MCF 10A (cell line): ENCODE measurements at regions of chr5 and their contacts with region 1.

Region 1: DNA sequence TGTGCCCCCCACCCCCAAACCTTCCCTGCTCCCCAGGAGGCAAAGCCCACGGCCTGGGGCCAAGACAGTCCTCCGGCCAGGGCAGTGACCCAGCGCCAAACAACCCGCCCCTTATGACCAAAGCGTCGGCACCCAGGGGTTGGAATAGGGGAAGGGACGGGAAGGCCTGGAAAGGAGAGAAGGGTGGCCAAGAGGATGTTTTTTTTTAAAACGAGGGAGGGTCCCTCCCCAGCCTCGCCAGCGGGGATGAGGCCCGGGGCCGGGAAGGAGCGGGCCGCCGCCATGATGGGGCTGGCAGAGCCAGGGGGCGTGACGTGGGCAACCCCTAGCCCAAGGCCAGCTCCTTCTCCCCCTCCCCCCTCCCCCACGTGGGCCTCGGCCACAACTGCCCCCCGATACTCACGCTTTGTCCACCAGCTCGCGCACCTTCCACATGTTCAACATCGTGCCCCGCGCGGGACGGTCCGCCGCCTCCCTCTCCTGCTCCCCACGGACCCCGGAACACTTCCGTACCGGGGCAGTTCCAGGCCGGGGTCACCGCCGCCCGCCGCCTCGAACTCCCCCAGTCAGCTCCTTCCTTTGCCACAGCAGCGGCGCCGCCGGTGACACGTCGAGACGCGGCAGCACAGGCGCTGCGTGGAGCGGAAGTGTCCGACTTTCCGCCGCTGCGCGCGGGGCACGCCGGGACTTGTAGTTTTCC is at the start of gene CLINT1:
- DNase-seq: peak; percentile 92
- H3K4me3 Mint-ChIP-seq: peak within 1 kb of the TSS; percentile 96
- H3K27ac Mint-ChIP-seq: peak within 1 kb of the TSS; percentile 99
- H3K4me1 Mint-ChIP-seq: peaks cover 22% of the 10 kb centered on the region
- H3K27me3 Mint-ChIP-seq: no peaks in the 10 kb centered on the region
- CTCF ChIP-seq: no peak
- total RNA-seq, gene CLINT1: 170 and 176 TPM in 2 replicates

Region 2: DNA sequence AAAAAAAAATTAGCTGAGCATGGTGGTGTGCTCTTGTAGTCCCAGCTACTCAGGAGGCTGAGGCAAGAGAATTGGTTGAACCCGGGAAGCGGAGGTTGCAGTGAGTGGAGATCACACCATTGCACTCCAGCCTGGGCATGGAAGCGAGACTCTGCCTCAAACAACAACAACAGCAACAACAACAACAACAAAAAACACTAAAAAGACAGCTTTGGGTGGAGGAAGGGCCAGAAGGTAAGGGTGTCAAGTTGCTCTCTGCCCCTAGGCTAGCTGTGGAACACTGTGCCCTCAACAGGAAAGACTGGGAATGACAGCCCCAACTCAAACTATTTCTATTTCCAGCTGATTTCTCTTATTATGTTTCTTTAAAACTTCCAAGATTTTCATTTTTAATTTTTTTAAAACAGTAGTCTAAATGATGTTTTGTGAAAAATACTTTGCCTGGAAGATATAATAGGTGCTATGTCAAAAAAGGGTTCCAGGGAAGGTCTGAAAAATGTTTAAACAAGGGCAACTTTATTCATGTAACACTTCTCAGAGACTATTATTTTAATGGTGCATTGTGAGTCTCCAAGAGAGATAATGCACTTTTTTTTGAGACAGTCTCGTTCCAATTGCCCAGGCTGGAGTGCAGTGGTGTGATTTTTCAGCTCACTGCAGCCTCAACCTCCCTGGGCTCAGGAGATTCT is 29.6 kb before region 1 on chr5:
- CTCF ChIA-PET with region 1: interaction called, 34 read pairs
- POLR2A ChIA-PET with region 1: interaction called, 5 read pairs
- intact Hi-C with region 1: no loop called
- DNase-seq: peak; percentile 64
- H3K4me3 Mint-ChIP-seq: no peak overlapping the region
- H3K27ac Mint-ChIP-seq: no peak overlapping the region
- H3K4me1 Mint-ChIP-seq: peaks cover 27% of the 10 kb centered on the region
- H3K27me3 Mint-ChIP-seq: no peaks in the 10 kb centered on the region
- CTCF ChIP-seq: peak; percentile 38

Region 3: GRCh38 chr5:157842185-157842584 is 16.5 kb before region 1 on chr5:
- CTCF ChIA-PET with region 1: interaction called, 35 read pairs
- POLR2A ChIA-PET with region 1: interaction called, 7 read pairs
- intact Hi-C with region 1: no loop called
- DNase-seq: no peak
- H3K4me3 Mint-ChIP-seq: no peak overlapping the region
- H3K27ac Mint-ChIP-seq: no peak overlapping the region
- H3K4me1 Mint-ChIP-seq: peaks cover 10% of the 10 kb centered on the region
- H3K27me3 Mint-ChIP-seq: no peaks in the 10 kb centered on the region
- CTCF ChIP-seq: no peak

Region 4: GRCh38 chr5:157900644-157901043 is 42.0 kb after region 1 on chr5:
- CTCF ChIA-PET with region 1: interaction called, 11 read pairs
- POLR2A ChIA-PET with region 1: interaction called, 4 read pairs
- intact Hi-C with region 1: no loop called
- DNase-seq: no peak
- H3K4me3 Mint-ChIP-seq: no peak overlapping the region
- H3K27ac Mint-ChIP-seq: no peak overlapping the region
- H3K4me1 Mint-ChIP-seq: no peaks in the 10 kb centered on the region
- H3K27me3 Mint-ChIP-seq: no peaks in the 10 kb centered on the region
- CTCF ChIP-seq: no peak

Region 5: GRCh38 chr5:157971571-157972216 is 113.0 kb after region 1 on chr5:
- CTCF ChIA-PET with region 1: no interaction called
- POLR2A ChIA-PET with region 1: no interaction called
- intact Hi-C with region 1: no loop called
- DNase-seq: no peak
- H3K4me3 Mint-ChIP-seq: no peak overlapping the region
- H3K27ac Mint-ChIP-seq: no peak overlapping the region
- H3K4me1 Mint-ChIP-seq: no peaks in the 10 kb centered on the region
- H3K27me3 Mint-ChIP-seq: peaks cover 9% of the 10 kb centered on the region
- CTCF ChIP-seq: no peak

Region 6: GRCh38 chr5:157994906-157995519 is 136.3 kb after region 1 on chr5:
- CTCF ChIA-PET with region 1: interaction called, 55 read pairs
- POLR2A ChIA-PET with region 1: interaction called, 7 read pairs
- intact Hi-C with region 1: loop called (anchors 1 kb)
- DNase-seq: peak; percentile 84
- H3K4me3 Mint-ChIP-seq: no peak overlapping the region
- H3K27ac Mint-ChIP-seq: no peak overlapping the region
- H3K4me1 Mint-ChIP-seq: peaks cover 10% of the 10 kb centered on the region
- H3K27me3 Mint-ChIP-seq: no peaks in the 10 kb centered on the region
- CTCF ChIP-seq: peak; percentile 85